K562 (cell line): ENCODE measurements at regions of chr3 and their contacts with region 1.

Region 1: DNA sequence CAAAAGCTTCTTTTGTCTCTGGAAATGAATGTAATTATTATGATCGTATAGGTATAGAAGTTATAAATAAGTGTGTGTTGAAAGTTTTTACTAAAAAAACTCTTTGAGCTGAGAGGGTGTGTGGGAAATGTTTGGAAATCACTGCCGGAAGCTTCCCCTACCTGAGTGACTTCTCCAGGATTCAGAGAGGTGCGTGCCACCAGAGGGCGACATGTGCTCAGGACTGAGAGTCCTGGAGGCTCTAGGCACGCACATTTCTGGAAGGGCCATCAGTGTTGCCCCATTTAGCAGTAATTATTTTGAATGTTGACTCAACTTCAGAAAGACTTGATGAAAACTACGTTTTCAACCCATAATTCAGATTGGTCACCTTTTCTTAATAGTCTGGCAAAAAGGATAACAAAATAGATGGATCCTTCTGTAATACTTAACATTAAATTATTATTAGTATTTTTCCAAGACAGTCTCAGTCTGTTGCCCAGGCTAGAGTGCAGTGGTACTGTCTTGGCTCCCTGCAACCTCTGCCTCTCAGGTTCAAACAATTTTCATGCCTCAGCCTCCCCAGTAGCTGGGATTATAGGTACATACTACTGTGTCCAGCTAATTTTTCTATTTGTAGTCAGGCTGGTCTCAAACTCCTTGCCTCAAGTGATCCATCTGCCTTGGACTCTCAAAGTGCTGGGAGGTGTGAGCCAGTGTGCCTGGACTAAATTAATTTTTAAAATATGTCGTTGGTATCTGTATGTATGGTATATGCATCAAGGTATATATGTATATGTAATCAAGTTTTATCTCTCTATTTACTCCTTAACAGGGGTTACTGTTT is 34.5 kb downstream of the GPR171 start:
- DNase-seq: peak; percentile 42 to 71 (median 52)
- ATAC-seq: peak; percentile 92
- H3K4me3 ChIP-seq: no peak overlapping the region
- H3K27ac ChIP-seq: no peak overlapping the region
- H3K4me1 ChIP-seq: no peaks in the 10 kb centered on the region
- H3K27me3 ChIP-seq: peaks cover 8 to 10% of the 10 kb centered on the region in 2 experiments; a peak in 3 of 5 replicates
- CTCF ChIP-seq: peak; percentile 76 to 79 (median 76)
- EP300 ChIP-seq: no peak
- POLR2A ChIP-seq: no peak
- RAD21 ChIP-seq: peak; percentile 69 to 80

Region 2: GRCh38 chr3:151282921-151283320 is 114.4 kb after region 1 on chr3:
- CTCF ChIA-PET with region 1: interaction called, 17 read pairs
- POLR2A ChIA-PET with region 1: no interaction called
- in situ Hi-C with region 1: loop called (anchors 10 kb)
- intact Hi-C with region 1: loop called (anchors 1 kb)
- DNase-seq: peak; percentile 41 to 51 (median 47)
- ATAC-seq: peak; percentile 59; the same call in 2 of the 3 replicates
- H3K4me3 ChIP-seq: no peak overlapping the region
- H3K27ac ChIP-seq: no peak overlapping the region
- H3K4me1 ChIP-seq: no peaks in the 10 kb centered on the region; a peak in 2 of 5 replicates
- H3K27me3 ChIP-seq: no peaks in the 10 kb centered on the region
- CTCF ChIP-seq: peak; percentile 47 to 81 (median 54); a peak in 4 of 6 replicates
- EP300 ChIP-seq: no peak
- POLR2A ChIP-seq: no peak
- RAD21 ChIP-seq: peak; percentile 83 to 85